ENCODE measurements at regions of chr10 and their contacts with region 1.

Region 1: GRCh38 chr10:110304780-110305421 is at the start of gene SMNDC1:
- DNase-seq: peak; percentile 96
- H3K4me3 Mint-ChIP-seq: peak within 1 kb of the TSS; percentile 97
- H3K27ac Mint-ChIP-seq: peak within 1 kb of the TSS; percentile 96
- H3K4me1 Mint-ChIP-seq: peaks cover 48% of the 10 kb centered on the region
- H3K27me3 Mint-ChIP-seq: no peaks in the 10 kb centered on the region
- total RNA-seq, gene SMNDC1: 47.8 and 48.0 TPM in 2 replicates

Region 2: GRCh38 chr10:110137142-110137545 is 167.8 kb before region 1 on chr10:
- intact Hi-C with region 1: loop called (anchors 1 kb)
- DNase-seq: no peak
- H3K4me3 Mint-ChIP-seq: no peak overlapping the region
- H3K27ac Mint-ChIP-seq: peak overlapping the region; percentile 1
- H3K4me1 Mint-ChIP-seq: peaks cover 33% of the 10 kb centered on the region
- H3K27me3 Mint-ChIP-seq: no peaks in the 10 kb centered on the region

Region 3: GRCh38 chr10:110547139-110547761 is 242.3 kb after region 1 on chr10:
- intact Hi-C with region 1: loop called (anchors 1 kb)
- DNase-seq: no peak
- H3K4me3 Mint-ChIP-seq: no peak overlapping the region
- H3K27ac Mint-ChIP-seq: peak overlapping the region; percentile 3
- H3K4me1 Mint-ChIP-seq: peaks cover 29% of the 10 kb centered on the region
- H3K27me3 Mint-ChIP-seq: peaks cover 23% of the 10 kb centered on the region

Region 4: GRCh38 chr10:110671788-110672579 is 367.1 kb after region 1 on chr10:
- intact Hi-C with region 1: loop called (anchors 5 kb)
- DNase-seq: peak; percentile 44
- H3K4me3 Mint-ChIP-seq: peak overlapping the region; percentile 81
- H3K27ac Mint-ChIP-seq: peak overlapping the region; percentile 36
- H3K4me1 Mint-ChIP-seq: peaks cover 5% of the 10 kb centered on the region
- H3K27me3 Mint-ChIP-seq: peaks cover 54% of the 10 kb centered on the region

Region 5: GRCh38 chr10:110871298-110872084 is 566.6 kb after region 1 on chr10 and contains the start of gene PDCD4:
- intact Hi-C with region 1: loop called (anchors 5 kb)
- DNase-seq: peak; percentile 94
- H3K4me3 Mint-ChIP-seq: peak within 1 kb of the TSS; percentile 96
- H3K27ac Mint-ChIP-seq: peak within 1 kb of the TSS; percentile 98
- H3K4me1 Mint-ChIP-seq: peaks cover 74% of the 10 kb centered on the region
- H3K27me3 Mint-ChIP-seq: no peaks in the 10 kb centered on the region
- total RNA-seq, gene PDCD4: 46.1 and 51.8 TPM in 2 replicates

Measured in activated T-helper 1 cell treated with anti-CD3 and anti-CD28 coated beads, Interleukin-12 subunit alpha, Interleukin-12 subunit beta, Interleukin-2, Interleukin-4 antibody, amounts not matched to agents 30 ng/mL and 10 ng/mL and 1 ng/mL, durations not matched to agents 14 hours and 24 hours and 36 hours (primary cell).